ENCODE measurements at regions of chr15 and their contacts with region 1.

Region 1: DNA sequence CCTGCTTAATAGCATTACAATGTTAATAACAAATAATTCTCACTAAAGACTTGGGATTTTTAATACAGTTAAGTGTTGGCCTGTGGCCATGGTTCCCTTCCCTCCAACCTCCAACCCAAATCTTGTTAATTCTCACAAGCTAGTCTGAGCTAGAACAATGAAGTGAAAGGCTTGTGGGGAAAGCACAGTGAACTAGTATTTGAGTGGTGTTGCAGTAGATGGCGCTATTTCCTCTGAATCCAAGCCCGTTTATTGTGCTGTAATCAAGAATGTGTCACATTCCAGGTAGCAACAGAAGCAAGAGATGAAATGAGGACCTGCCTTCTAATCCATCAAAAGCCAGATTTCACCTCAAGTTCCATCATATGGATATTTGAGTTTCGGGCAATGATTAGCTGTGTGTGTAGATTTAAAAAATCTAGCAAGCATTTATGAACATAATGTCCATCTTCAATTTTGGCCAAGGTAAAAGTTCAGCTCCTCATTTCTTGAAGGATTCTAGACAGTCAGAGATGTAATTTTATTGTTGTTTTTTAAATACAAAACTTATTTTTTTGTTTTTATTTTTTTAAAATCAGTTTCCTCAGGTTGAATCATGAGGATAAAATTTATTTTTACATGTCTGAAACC is 160.7 kb downstream of the SQOR start:
- DNase-seq: peak in 1 of 2 donors; percentile 43
- ATAC-seq: peak in 7 of 8 donors; percentile 50 to 73 (median 53)
- H3K4me3 ChIP-seq: no peak overlapping the region
- H3K27ac ChIP-seq: no peak overlapping the region
- H3K4me1 ChIP-seq: peaks cover 0 to 7% (median 0%) of the 10 kb centered on the region in 9 donors
- H3K27me3 ChIP-seq: peaks cover 0 to 6% (median 0%) of the 10 kb centered on the region in 7 donors
- CTCF ChIP-seq: peak in 8 of 9 donors; percentile 41 to 79 (median 70)

Region 2: GRCh38 chr15:45386420-45386819 is 409.1 kb before region 1 on chr15:
- intact Hi-C with region 1: no loop called
- DNase-seq: peak in 1 of 2 donors; percentile 53
- ATAC-seq: peak; percentile 68 to 95 (median 86)
- H3K4me3 ChIP-seq: no peak overlapping the region
- H3K27ac ChIP-seq: peak overlapping the region in 9 of 10 donors; percentile 37 to 83 (median 71)
- H3K4me1 ChIP-seq: peaks cover 2 to 60% (median 26%) of the 10 kb centered on the region in 9 donors
- H3K27me3 ChIP-seq: no peaks in the 10 kb centered on the region
- CTCF ChIP-seq: no peak

Region 3: DNA sequence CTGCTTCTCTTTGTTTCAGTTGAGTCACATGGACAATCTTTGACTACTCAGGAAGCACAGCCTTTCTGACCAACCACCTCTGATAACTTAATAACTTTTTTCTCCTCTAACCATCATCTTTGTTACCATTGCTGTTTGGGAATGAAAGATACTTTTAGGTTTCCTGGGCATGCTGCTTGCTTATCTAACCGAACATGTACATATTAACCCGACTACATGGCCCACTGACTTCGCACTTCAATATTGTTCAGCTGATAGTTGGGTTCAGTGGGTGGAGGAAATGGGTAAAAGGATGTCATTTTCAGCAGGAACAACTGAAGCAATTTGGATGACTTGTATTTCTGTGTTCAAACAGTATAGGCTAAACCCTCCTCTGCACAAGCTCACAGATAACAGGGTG is 53.6 kb after region 1 on chr15:
- intact Hi-C with region 1: no loop called
- DNase-seq: no peak
- ATAC-seq: no peak
- H3K4me3 ChIP-seq: no peak overlapping the region
- H3K27ac ChIP-seq: no peak overlapping the region
- H3K4me1 ChIP-seq: no peaks in the 10 kb centered on the region
- H3K27me3 ChIP-seq: no peaks in the 10 kb centered on the region
- CTCF ChIP-seq: no peak

Region 4: DNA sequence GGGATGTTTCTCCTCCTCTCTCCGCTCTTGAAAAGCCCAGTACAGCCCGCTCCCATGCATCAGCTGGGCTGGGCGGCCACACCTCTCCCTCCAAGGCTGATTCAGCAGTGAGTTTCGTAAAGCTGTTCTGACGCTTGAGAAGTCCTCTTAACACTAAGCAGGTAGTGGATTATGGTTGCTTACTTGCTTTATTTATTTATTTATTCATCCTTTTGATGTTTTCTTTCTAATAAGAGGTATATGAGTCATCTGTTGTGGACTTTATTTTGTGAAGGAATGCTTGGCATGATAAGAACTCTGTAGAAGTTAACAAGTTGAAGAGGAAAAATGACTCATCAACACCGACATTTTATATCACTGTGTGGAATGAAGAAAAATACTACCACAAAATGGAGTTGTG is 124.3 kb after region 1 on chr15:
- intact Hi-C with region 1: loop called in 1 of 10 experiments (anchors 10 kb)
- DNase-seq: no peak
- ATAC-seq: peak in 5 of 8 donors; percentile 8 to 72 (median 61)
- H3K4me3 ChIP-seq: no peak overlapping the region
- H3K27ac ChIP-seq: peak overlapping the region in 8 of 10 donors; percentile 5 to 78 (median 62)
- H3K4me1 ChIP-seq: peaks cover 0 to 35% (median 14%) of the 10 kb centered on the region in 9 donors
- H3K27me3 ChIP-seq: no peaks in the 10 kb centered on the region
- CTCF ChIP-seq: no peak

Region 5: GRCh38 chr15:46080016-46080415 is 284.5 kb after region 1 on chr15:
- intact Hi-C with region 1: loop called in 3 of 10 experiments (anchors 10 kb)
- DNase-seq: no peak
- ATAC-seq: peak in 5 of 8 donors; percentile 30 to 69 (median 50)
- H3K4me3 ChIP-seq: no peak overlapping the region
- H3K27ac ChIP-seq: peak overlapping the region in 3 of 10 donors; percentile 23 to 56 (median 53)
- H3K4me1 ChIP-seq: peaks cover 0 to 22% (median 4%) of the 10 kb centered on the region in 9 donors
- H3K27me3 ChIP-seq: no peaks in the 10 kb centered on the region
- CTCF ChIP-seq: no peak

Region 6: GRCh38 chr15:46091860-46092450 is 296.4 kb after region 1 on chr15:
- intact Hi-C with region 1: loop called in 2 of 10 experiments (anchors 10 kb)
- DNase-seq: peak in 1 of 2 donors; percentile 16
- ATAC-seq: no peak
- H3K4me3 ChIP-seq: no peak overlapping the region
- H3K27ac ChIP-seq: no peak overlapping the region
- H3K4me1 ChIP-seq: peaks cover 0 to 25% (median 8%) of the 10 kb centered on the region in 9 donors
- H3K27me3 ChIP-seq: no peaks in the 10 kb centered on the region
- CTCF ChIP-seq: peak in 8 of 9 donors; percentile 12 to 62 (median 46)

Region 7: GRCh38 chr15:46280762-46281542 is 485.4 kb after region 1 on chr15:
- intact Hi-C with region 1: loop called in 2 of 10 experiments (anchors 5 to 10 kb)
- DNase-seq: no peak
- ATAC-seq: peak in 1 of 8 donors; percentile 33
- H3K4me3 ChIP-seq: no peak overlapping the region
- H3K27ac ChIP-seq: no peak overlapping the region
- H3K4me1 ChIP-seq: no peaks in the 10 kb centered on the region
- H3K27me3 ChIP-seq: no peaks in the 10 kb centered on the region
- CTCF ChIP-seq: peak in 6 of 9 donors; percentile 14 to 51 (median 29)

Region 8: GRCh38 chr15:46304320-46304719 is 508.8 kb after region 1 on chr15:
- intact Hi-C with region 1: loop called in 1 of 10 experiments (anchors 10 kb)
- DNase-seq: no peak
- ATAC-seq: no peak
- H3K4me3 ChIP-seq: no peak overlapping the region
- H3K27ac ChIP-seq: no peak overlapping the region
- H3K4me1 ChIP-seq: peaks cover 0 to 4% (median 0%) of the 10 kb centered on the region in 9 donors
- H3K27me3 ChIP-seq: peaks cover 0 to 7% (median 0%) of the 10 kb centered on the region in 7 donors
- CTCF ChIP-seq: peak in 3 of 9 donors; percentile 27 to 34 (median 28)